Sciatic nerve (tissue), 2 donors: ENCODE measurements at regions of chr5 and their contacts with region 1.

Region 1: DNA sequence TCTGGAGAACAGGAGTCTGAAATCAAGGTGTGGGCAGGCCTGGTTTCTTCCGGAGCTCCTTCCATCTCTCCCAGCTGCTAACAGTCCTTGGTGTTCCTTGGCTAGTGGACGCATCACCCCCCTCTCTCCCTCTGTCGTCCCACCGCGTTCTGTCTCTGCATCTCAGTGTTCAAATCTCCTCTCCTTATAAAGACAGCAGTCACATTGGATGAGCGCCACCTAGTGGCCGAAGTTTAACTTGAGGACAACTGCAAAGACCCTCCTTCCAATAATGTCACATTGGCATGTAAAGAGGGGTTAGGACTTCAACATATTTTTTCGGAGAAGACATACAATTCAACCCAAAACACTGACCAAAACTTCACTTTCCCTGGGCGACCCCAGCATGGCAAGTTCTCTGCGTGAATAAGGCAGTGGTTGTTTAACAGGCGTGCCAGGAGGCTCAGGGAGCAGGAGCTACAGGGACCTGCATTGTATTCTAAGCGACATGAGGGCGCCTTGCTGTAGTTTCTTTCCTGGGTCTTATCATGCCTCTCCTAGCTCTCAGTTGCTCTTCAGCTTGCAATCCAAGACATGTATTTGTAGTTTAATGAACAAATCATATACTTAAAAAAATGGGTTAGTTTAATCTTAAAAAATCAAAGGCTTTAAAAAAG is 27.9 kb upstream of the BASP1 start:
- DNase-seq: peak; percentile 90
- ATAC-seq: peak; percentile 59

Region 2: GRCh38 chr5:15821506-15821905 is 1368.0 kb before region 1 on chr5:
- intact Hi-C with region 1: no loop called
- DNase-seq: no peak
- ATAC-seq: no peak

Region 3: DNA sequence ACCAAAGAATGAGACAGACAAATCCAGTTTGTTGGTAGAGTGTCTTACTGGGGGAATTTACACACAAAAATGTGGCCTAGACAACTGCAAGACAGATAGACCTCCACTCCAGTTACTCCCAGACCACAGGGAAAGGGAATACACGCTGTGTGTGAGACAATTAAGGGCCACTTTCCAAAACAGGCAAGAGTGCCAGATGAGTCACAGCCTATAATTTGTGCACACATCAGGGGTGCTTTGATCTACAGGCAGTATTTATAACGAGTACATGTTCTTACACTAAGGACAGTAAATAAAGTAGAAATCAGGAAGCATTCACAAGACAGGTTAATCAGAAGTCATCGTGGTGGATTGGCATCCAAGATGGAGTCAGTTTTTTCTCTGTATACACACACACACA is 838.7 kb before region 1 on chr5:
- intact Hi-C with region 1: loop called (anchors 5 kb)
- DNase-seq: no peak
- ATAC-seq: no peak

Region 4: GRCh38 chr5:16428359-16428758 is 761.1 kb before region 1 on chr5:
- intact Hi-C with region 1: no loop called
- DNase-seq: no peak
- ATAC-seq: no peak

Region 5: DNA sequence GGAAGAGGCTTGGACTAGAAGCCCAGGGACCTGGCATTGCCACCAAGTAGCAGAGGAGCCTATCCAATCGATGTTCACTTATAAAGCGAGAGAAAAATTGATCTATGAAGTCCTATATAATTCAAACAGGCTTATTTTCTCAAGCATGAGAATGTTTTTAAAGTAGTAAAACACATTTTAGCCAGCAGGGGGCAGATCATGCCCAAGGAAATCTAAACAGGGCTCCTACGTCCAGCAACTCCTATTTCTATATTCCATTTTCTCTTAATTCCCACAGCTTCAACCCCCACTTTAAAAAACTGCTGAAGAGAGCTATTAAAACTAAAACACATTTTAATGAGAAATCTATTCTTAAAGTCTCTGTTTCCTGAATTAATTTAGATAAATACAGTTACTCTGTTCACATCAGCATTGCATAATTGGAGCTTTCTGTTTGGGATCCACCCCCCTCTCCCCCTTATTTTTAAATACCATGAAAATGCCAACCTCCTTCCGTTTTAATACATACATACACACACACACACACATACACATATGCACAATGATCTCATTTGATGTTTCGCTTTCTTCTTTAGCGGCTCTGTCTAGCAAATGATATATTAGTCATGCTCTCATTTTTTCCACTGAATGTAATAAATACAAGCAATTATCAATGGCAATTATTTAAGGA is 398.3 kb before region 1 on chr5:
- intact Hi-C with region 1: loop called (anchors 10 kb)
- DNase-seq: no peak
- ATAC-seq: peak; percentile 50

Region 6: GRCh38 chr5:17511775-17512325 is 322.3 kb after region 1 on chr5:
- intact Hi-C with region 1: no loop called
- DNase-seq: no peak
- ATAC-seq: no peak